ENCODE measurements at regions of chr9 and their contacts with region 1.

Region 1: GRCh38 chr9:99825172-99826046 is 3.7 kb downstream of the NR4A3 start:
- DNase-seq: no peak
- H3K4me3 Mint-ChIP-seq: peak overlapping the region; percentile 94
- H3K27ac Mint-ChIP-seq: no peak overlapping the region
- H3K4me1 Mint-ChIP-seq: peaks cover 57% of the 10 kb centered on the region
- H3K27me3 Mint-ChIP-seq: peaks cover 33% of the 10 kb centered on the region

Region 2: GRCh38 chr9:99726758-99727157 is 98.7 kb before region 1 on chr9:
- CTCF ChIA-PET with region 1: no interaction called
- intact Hi-C with region 1: no loop called
- DNase-seq: no peak
- H3K4me3 Mint-ChIP-seq: no peak overlapping the region
- H3K27ac Mint-ChIP-seq: no peak overlapping the region
- H3K4me1 Mint-ChIP-seq: peaks cover 2% of the 10 kb centered on the region
- H3K27me3 Mint-ChIP-seq: no peaks in the 10 kb centered on the region

Region 3: GRCh38 chr9:99807276-99807852 is 18.0 kb before region 1 on chr9:
- CTCF ChIA-PET with region 1: interaction called, 13 read pairs
- intact Hi-C with region 1: loop called (anchors 1 kb)
- DNase-seq: peak; percentile 79
- H3K4me3 Mint-ChIP-seq: no peak overlapping the region
- H3K27ac Mint-ChIP-seq: no peak overlapping the region
- H3K4me1 Mint-ChIP-seq: peaks cover 21% of the 10 kb centered on the region
- H3K27me3 Mint-ChIP-seq: no peaks in the 10 kb centered on the region

Region 4: GRCh38 chr9:99851500-99851822 is 26.1 kb after region 1 on chr9:
- CTCF ChIA-PET with region 1: interaction called, 3 read pairs
- intact Hi-C with region 1: loop called (anchors 2 kb)
- DNase-seq: peak; percentile 47
- H3K4me3 Mint-ChIP-seq: no peak overlapping the region
- H3K27ac Mint-ChIP-seq: no peak overlapping the region
- H3K4me1 Mint-ChIP-seq: peaks cover 27% of the 10 kb centered on the region
- H3K27me3 Mint-ChIP-seq: no peaks in the 10 kb centered on the region

Region 5: GRCh38 chr9:99906403-99907207 is 81.2 kb after region 1 on chr9 and contains the start of gene STX17:
- CTCF ChIA-PET with region 1: interaction called, 8 read pairs
- intact Hi-C with region 1: loop called (anchors 1 kb)
- DNase-seq: peak; percentile 75
- H3K4me3 Mint-ChIP-seq: peak within 1 kb of the TSS; percentile 95
- H3K27ac Mint-ChIP-seq: peak within 1 kb of the TSS; percentile 95
- H3K4me1 Mint-ChIP-seq: peaks cover 22% of the 10 kb centered on the region
- H3K27me3 Mint-ChIP-seq: no peaks in the 10 kb centered on the region
- total RNA-seq, gene STX17: 28.1 to 31.6 TPM

Measured in activated naive CD4-positive, alpha-beta T cell treated with anti-CD3 and anti-CD28 coated beads for 36 hours (primary cell).